ENCODE measurements at regions of chr2 and their contacts with region 1.

Region 1: DNA sequence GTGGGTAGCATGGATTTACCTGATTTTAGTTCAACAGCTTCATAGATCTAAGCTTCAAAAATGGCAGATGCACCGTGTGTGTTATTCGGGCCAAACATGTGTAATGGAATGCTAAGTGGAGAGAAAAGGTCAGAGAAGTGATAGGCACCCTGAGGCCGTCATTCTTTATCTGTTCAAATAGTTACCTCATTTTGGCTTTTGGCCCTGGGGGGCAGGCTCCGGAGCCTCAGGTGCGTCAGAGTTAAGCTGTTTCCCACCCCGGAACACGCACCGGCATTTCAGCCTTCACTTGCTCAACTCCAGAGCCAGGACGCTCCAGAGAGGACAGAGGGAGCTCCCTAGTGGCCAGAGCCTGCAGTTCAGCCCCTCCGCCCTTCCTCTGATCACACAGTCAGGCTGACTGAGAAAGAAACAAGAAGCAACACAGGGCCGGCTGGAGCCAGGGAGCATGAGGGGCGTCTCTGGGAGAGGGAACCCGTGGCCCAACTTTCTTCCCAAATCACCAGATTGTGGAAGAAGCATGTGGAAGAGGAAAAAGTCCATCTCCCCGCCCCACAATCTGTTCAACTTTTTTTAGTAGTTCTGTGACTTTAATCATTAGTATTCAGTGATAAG is 135.2 kb upstream of the EPC2 start:
- DNase-seq: peak; percentile 81 to 87
- ATAC-seq: peak; percentile 100
- H3K4me3 ChIP-seq: peak overlapping the region; percentile 39
- H3K27ac ChIP-seq: peak overlapping the region; percentile 4 to 68; a peak in 5 of 6 replicates
- H3K4me1 ChIP-seq: no peaks in the 10 kb centered on the region
- CTCF ChIP-seq: peak; percentile 90
- EP300 ChIP-seq: no peak
- POLR2A ChIP-seq: no peak
- RAD21 ChIP-seq: peak; percentile 90 to 95

Region 2: DNA sequence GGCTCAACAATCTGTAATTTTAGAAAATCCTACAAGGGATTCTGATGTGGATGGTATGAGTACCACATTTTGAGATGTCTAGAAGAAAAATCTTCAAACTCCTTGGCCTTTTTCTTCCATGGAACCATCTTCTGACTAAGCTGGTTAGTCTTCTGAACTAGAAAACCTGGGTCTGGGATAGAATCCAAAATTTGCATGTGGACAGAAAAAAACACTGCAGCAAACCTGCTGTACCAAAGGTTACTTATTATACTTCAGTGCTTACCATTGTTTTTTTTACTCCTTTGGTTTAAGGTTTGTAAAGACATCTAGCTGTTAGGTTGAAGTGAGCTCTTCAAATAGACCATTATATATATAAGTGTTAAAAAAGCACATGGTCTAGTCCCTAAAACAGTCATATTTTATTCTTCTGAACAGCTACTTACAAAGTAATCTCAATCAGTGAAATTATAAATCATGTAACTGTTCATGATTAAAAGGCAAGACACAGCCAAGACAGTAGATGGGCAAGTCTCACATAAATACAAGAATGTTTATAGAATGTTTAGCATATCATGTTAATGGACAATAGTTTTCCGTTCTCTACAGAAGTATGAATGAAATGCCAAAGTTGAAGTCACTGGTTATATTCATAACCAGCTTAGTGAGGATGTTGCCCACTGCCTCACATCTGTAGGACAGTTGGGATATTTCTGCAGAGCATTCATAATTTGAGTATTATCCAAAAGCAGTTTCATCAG is 574.3 kb before region 1 on chr2:
- CTCF ChIA-PET with region 1: interaction called, 11 read pairs
- POLR2A ChIA-PET with region 1: no interaction called
- DNase-seq: no peak
- ATAC-seq: no peak
- H3K4me3 ChIP-seq: no peak overlapping the region
- H3K27ac ChIP-seq: no peak overlapping the region
- H3K4me1 ChIP-seq: 0 out of 3 replicates have a peak, but pooled peaks cover 4% of the 10 kb centered on the region
- CTCF ChIP-seq: no peak
- EP300 ChIP-seq: no peak
- POLR2A ChIP-seq: no peak
- RAD21 ChIP-seq: no peak

Region 3: GRCh38 chr2:147989809-147990403 is 519.5 kb before region 1 on chr2:
- CTCF ChIA-PET with region 1: interaction called, 19 read pairs
- POLR2A ChIA-PET with region 1: no interaction called
- DNase-seq: peak; percentile 44 to 56
- ATAC-seq: peak; percentile 71 to 85; a peak in 5 of 6 replicates
- H3K4me3 ChIP-seq: no peak overlapping the region
- H3K27ac ChIP-seq: no peak overlapping the region
- H3K4me1 ChIP-seq: peaks cover 3% of the 10 kb centered on the region; the same call in 1 of the 3 replicates
- CTCF ChIP-seq: peak; percentile 93
- EP300 ChIP-seq: no peak
- POLR2A ChIP-seq: no peak
- RAD21 ChIP-seq: peak; percentile 84 to 89

Measured in A549 (cell line).